SK-N-SH (cell line): ENCODE measurements at regions of chr5 and their contacts with region 1.

Region 1: GRCh38 chr5:146947181-146947941 is 68.8 kb upstream of the PPP2R2B start:
- DNase-seq: peak; percentile 21
- H3K4me3 ChIP-seq: no peak overlapping the region; a peak in 1 of 4 replicates
- H3K27ac ChIP-seq: no peak overlapping the region
- H3K4me1 ChIP-seq: peaks cover 0 to 6% of the 10 kb centered on the region in 2 experiments; a peak in 2 of 4 replicates
- H3K27me3 ChIP-seq: no peaks in the 10 kb centered on the region
- CTCF ChIP-seq: peak; percentile 65
- EP300 ChIP-seq: no peak
- RAD21 ChIP-seq: peak; percentile 72

Region 2: DNA sequence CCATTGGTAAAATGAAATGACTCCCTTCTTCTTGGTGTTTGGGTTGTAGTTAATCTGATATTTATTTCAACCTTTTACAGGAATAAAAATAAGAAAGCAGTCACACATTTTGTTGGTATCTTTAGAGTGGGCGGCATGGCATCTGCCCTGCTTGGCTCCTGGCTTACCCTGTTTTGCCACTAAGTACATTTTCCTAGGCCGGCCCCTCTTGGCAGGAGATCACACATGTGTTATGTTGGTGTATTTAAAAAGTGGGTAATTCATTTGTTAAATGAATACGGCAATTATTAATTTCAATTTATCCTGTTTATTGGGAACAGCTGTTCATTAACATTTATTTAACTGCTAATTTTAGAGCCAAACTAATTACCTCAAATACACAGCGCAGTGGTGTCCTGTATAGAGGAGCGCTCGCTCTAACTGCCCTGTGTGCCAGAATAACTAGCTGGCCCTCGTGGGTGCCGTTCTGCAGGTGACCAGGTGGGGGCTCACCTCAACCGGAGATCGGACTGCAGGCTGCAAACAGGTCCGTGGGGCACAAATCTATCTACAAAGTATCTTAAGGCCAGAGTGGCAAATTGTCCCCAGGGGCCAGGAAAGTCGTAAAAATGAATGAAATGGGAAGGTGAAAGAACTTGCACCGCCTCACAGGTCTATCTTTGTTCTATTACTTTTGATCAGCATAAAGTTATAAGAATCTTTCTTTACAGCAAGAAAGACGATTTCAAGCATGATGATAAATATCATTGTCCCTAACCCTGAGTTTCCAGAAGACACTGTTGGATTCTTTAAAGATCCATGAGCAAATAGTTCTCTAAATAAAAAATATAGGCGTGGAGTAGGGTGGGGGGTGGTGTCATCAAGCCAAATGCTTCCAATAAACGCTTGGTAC is 405.2 kb before region 1 on chr5:
- CTCF ChIA-PET with region 1: interaction called, 19 read pairs
- POLR2A ChIA-PET with region 1: no interaction called
- DNase-seq: peak; percentile 74
- H3K4me3 ChIP-seq: peak overlapping the region in 1 of 2 experiments; percentile 20; a peak in 1 of 4 replicates
- H3K27ac ChIP-seq: no peak overlapping the region
- H3K4me1 ChIP-seq: no peaks in the 10 kb centered on the region; a peak in 1 of 4 replicates
- H3K27me3 ChIP-seq: no peaks in the 10 kb centered on the region
- CTCF ChIP-seq: peak; percentile 94
- EP300 ChIP-seq: no peak
- RAD21 ChIP-seq: peak; percentile 96

Region 3: DNA sequence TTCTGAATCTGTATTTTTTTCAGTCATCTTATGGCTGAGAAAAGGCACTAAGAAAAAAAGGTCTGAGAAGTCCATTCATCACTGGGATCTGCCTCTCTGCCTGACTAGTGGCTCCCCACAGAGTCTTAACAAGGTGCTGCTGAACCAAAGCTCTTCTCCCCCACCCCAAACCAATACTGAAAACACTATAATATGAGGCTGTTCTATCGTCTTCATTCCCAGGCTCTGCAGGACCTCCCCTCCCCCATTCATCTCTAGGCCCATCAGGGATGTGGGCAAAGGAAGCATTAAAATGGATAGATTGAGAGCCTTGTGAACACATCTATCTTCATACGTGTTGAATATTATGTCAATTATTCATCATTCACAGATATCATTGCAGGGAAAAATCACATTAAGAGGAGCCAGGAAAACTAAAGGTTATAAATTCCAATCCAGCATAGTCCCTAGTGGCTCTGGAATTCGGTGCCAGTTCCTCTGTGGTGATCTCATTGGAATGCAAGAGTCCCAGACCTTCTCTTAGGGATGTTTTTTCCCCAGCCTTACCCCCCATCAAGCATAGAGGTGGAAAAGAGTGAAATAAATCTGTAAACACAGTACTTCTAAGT is 387.1 kb before region 1 on chr5:
- CTCF ChIA-PET with region 1: interaction called, 24 read pairs
- POLR2A ChIA-PET with region 1: no interaction called
- DNase-seq: no peak
- H3K4me3 ChIP-seq: peak overlapping the region in 1 of 2 experiments; percentile 3; a peak in 1 of 4 replicates
- H3K27ac ChIP-seq: peak overlapping the region in 1 of 2 experiments; percentile 72; a peak in 3 of 4 replicates
- H3K4me1 ChIP-seq: peaks cover 0 to 21% of the 10 kb centered on the region in 2 experiments
- H3K27me3 ChIP-seq: no peaks in the 10 kb centered on the region
- CTCF ChIP-seq: no peak
- EP300 ChIP-seq: peak in 1 of 2 experiments; percentile 63; a peak in 1 of 4 replicates
- RAD21 ChIP-seq: no peak

Region 4: GRCh38 chr5:146565764-146566367 is 381.5 kb before region 1 on chr5:
- CTCF ChIA-PET with region 1: interaction called, 24 read pairs
- POLR2A ChIA-PET with region 1: no interaction called
- DNase-seq: peak; percentile 75
- H3K4me3 ChIP-seq: peak overlapping the region in 1 of 2 experiments; percentile 23; a peak in 1 of 4 replicates
- H3K27ac ChIP-seq: no peak overlapping the region
- H3K4me1 ChIP-seq: peaks cover 2 to 18% of the 10 kb centered on the region in 2 experiments; a peak in 3 of 4 replicates
- H3K27me3 ChIP-seq: no peaks in the 10 kb centered on the region
- CTCF ChIP-seq: peak; percentile 77
- EP300 ChIP-seq: no peak
- RAD21 ChIP-seq: peak; percentile 92

Region 5: DNA sequence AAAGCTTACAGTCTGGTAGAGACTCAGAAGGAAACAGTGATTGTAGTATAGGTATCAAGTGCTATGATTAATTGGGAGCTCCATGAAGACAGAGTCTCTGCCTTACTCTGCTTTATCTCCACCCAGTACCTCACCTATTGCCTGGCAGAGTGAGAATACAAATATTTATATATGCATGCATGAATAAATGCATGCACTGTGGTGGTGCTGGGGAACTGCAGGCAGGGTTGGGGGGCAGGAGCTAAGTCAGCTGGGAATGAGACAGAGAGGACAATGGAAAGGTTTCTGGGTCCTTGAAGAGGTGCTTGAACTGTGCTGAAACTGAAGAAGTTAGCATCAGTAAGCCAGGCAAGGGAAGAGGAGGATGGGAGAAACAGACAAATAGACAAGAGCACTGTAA is 12.0 kb after region 1 on chr5:
- CTCF ChIA-PET with region 1: interaction called, 17 read pairs
- POLR2A ChIA-PET with region 1: no interaction called
- DNase-seq: no peak
- H3K4me3 ChIP-seq: no peak overlapping the region
- H3K27ac ChIP-seq: no peak overlapping the region
- H3K4me1 ChIP-seq: no peaks in the 10 kb centered on the region
- H3K27me3 ChIP-seq: no peaks in the 10 kb centered on the region
- CTCF ChIP-seq: no peak
- EP300 ChIP-seq: no peak
- RAD21 ChIP-seq: no peak